Mammary epithelial cell (primary cell): ENCODE measurements at regions of chr12 and their contacts with region 1.

Region 1: GRCh38 chr12:15522565-15523187 is 200.4 kb downstream of the PTPRO start:
- DNase-seq: peak; percentile 39
- H3K4me3 ChIP-seq: no peak overlapping the region
- H3K27ac ChIP-seq: no peak overlapping the region
- H3K4me1 ChIP-seq: peaks cover 22% of the 10 kb centered on the region
- H3K27me3 ChIP-seq: no peaks in the 10 kb centered on the region
- CTCF ChIP-seq: peak; percentile 65 to 71

Region 2: DNA sequence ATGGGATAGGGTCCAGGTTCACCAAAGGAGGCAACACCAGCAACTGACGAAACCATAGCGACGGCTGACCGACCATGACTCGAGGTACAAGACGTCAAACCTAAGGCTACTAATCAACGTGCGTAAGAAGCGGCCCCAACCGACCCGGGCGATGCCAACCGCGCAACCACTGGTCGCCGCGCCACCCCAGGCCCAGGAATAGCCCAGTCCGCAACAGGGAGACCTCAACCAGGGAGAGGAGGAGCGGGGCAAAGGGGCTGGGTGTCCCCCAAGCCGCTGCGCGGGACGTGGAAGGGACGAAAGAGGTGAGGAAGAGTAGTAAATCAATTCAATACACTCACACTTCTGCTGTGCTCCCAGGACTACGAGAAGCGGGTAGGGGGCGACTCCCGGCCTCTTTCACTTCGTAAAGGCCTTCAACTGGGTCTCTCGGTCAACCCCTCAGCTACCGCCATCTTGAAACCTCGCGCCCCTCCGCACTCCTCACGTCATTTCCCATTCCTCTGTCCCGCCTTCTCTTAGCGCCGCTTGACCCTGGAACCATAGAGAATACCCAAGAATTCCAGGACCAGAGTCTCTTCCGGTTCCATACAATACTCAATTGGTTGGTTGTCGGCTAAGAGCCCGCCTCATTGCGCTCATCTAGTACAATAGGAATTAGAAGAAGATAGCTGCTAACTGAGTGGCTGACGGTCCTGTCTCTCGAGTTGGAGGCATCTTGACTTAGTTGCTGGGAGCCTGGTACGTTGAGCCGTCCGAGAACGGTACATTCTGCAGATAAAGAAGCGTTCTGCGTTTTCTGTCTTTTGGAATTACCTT is 719.5 kb before region 1 on chr12 and contains the starts of genes C12orf60 and WBP11:
- CTCF ChIA-PET with region 1: no interaction called
- dilution Hi-C with region 1: no loop called
- in situ Hi-C with region 1: no loop called
- intact Hi-C with region 1: loop called (anchors 10 kb)
- DNase-seq: peak; percentile 99
- H3K4me3 ChIP-seq: peak within 1 kb of the TSS; percentile 70 to 100 (median 99)
- H3K27ac ChIP-seq: peak within 1 kb of the TSS; percentile 99
- H3K4me1 ChIP-seq: peaks cover 14% of the 10 kb centered on the region
- H3K27me3 ChIP-seq: no peaks in the 10 kb centered on the region
- CTCF ChIP-seq: no peak
- total RNA-seq, gene C12orf60: 0.83 to 1.3 TPM
- total RNA-seq, gene WBP11: 12.0 to 61.2 TPM

Region 3: GRCh38 chr12:14995583-14996425 is 526.9 kb before region 1 on chr12:
- CTCF ChIA-PET with region 1: interaction called, 15 read pairs
- dilution Hi-C with region 1: no loop called
- in situ Hi-C with region 1: no loop called
- intact Hi-C with region 1: loop called (anchors 5 kb)
- DNase-seq: peak; percentile 29
- H3K4me3 ChIP-seq: no peak overlapping the region
- H3K27ac ChIP-seq: no peak overlapping the region
- H3K4me1 ChIP-seq: peaks cover 2% of the 10 kb centered on the region
- H3K27me3 ChIP-seq: no peaks in the 10 kb centered on the region
- CTCF ChIP-seq: peak; percentile 61 to 63

Region 4: DNA sequence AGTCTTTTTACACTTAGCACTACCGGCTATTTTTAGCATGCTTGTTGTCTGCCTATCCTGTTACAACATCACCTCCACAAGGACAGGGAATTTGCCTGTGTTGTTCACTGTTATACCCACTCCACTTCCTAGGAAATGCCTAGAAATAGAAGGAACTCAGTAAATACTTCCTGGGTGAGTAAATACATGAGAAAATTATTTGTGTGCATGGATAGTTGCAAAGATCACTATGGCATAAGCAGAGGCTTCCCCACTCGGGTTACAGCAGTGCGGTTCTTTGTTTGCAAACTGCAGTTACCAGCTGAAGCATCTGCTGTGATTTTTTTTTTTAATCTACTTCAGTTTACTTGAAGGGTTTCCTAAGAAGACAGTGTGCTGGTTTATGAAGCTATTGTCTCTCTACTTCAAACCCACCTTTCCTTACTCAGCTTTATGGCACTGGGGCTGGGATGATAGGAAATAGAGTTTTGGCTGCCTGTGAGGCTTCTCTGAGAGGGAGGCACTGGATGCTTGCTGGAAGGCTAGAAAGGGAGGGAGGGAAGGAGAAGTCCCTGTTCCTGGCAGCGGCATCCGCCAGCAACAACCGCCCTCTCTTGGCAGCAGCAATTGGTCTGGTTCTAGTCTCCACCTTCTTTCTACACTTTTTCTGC is 520.8 kb before region 1 on chr12:
- CTCF ChIA-PET with region 1: no interaction called
- dilution Hi-C with region 1: no loop called
- in situ Hi-C with region 1: no loop called
- intact Hi-C with region 1: loop called (anchors 5 kb)
- DNase-seq: no peak
- H3K4me3 ChIP-seq: no peak overlapping the region
- H3K27ac ChIP-seq: no peak overlapping the region
- H3K4me1 ChIP-seq: peaks cover 2% of the 10 kb centered on the region
- H3K27me3 ChIP-seq: no peaks in the 10 kb centered on the region
- CTCF ChIP-seq: no peak

Region 5: DNA sequence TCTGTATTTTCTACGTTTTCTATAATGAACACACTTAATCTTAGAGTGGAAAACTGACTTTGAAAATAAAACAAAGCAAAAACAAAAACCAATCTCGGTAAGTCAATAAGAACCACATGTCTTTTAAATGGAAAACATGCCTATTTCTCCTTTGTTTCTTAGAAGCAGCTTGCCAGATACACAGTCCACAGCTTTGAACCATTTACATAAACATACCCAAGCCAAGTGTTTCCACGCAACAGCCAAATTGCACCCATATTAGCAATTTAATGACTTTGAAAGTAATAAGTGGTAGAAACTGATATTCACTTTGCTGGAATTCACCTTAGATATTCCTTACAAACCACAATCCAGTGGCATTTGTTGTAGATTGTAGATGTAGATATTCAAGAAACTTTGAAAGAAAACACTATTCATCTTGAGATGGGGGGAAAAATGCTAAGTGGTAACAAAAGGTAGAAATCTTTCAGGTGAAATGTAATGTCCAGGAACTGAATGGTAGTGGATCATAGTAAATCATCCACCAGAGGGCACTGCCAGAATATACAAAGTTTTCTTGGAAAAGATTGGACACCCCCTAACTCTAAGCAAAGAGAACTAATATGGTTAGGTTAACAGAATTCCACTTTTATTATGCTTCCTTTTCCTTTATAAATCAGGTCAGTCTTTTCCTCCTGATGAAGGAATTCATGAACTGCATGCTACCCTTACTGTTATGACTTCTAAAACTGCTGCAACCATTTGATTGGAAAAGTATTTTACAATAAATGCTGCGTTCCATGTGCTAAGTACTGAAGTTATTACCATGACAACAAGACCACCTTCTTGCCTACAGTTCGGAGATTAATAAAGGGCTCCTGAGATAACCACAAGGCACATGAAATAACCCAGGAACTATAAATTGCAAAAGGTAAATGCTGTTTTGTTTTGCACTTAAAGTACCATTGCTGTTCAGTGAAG is 371.2 kb before region 1 on chr12:
- CTCF ChIA-PET with region 1: interaction called, 3 read pairs
- dilution Hi-C with region 1: no loop called
- in situ Hi-C with region 1: loop called in 1 of 2 experiments (anchors 10 kb)
- intact Hi-C with region 1: loop called (anchors 1 kb)
- DNase-seq: no peak
- H3K4me3 ChIP-seq: no peak overlapping the region
- H3K27ac ChIP-seq: no peak overlapping the region
- H3K4me1 ChIP-seq: peaks cover 10% of the 10 kb centered on the region
- H3K27me3 ChIP-seq: no peaks in the 10 kb centered on the region
- CTCF ChIP-seq: peak; percentile 28 to 61

Region 6: GRCh38 chr12:15227004-15227679 is 295.5 kb before region 1 on chr12:
- CTCF ChIA-PET with region 1: interaction called, 3 read pairs
- dilution Hi-C with region 1: no loop called
- in situ Hi-C with region 1: no loop called
- intact Hi-C with region 1: loop called (anchors 1 kb)
- DNase-seq: peak; percentile 36
- H3K4me3 ChIP-seq: no peak overlapping the region
- H3K27ac ChIP-seq: no peak overlapping the region
- H3K4me1 ChIP-seq: no peaks in the 10 kb centered on the region
- H3K27me3 ChIP-seq: no peaks in the 10 kb centered on the region
- CTCF ChIP-seq: peak; percentile 76 to 79

Region 7: DNA sequence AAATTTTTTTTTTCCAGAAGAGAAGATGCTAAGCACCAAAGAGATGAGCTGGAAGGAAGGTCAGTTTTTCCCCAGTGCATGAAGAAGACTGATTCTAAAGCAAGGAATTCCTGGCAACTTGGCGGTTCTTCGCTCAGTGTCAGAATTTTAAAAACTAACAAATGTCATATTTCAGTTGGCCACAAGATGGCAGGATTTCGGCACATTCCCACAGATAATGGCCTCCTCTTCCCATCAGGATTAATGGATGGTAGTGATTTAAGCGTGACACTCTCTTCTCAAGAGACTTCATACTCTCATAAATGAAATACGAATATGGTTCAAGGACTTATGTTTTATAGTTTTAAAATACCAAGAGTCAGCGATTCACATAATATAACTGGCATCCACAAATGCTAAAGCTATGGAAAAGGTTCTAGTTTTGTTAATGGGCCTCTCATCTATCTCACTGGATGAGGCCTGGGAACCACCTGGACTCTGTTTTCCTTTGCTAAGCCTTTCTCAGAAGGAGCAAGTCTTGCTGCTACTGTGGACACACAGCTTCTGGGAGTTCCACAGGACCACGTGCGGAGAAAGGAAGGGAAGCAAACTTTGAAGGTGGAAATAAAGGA is 246.5 kb before region 1 on chr12:
- CTCF ChIA-PET with region 1: interaction called, 5 read pairs
- dilution Hi-C with region 1: no loop called
- in situ Hi-C with region 1: loop called (anchors 5 kb)
- intact Hi-C with region 1: loop called (anchors 1 kb)
- DNase-seq: peak; percentile 48
- H3K4me3 ChIP-seq: no peak overlapping the region
- H3K27ac ChIP-seq: peak overlapping the region; percentile 88
- H3K4me1 ChIP-seq: peaks cover 54% of the 10 kb centered on the region
- H3K27me3 ChIP-seq: no peaks in the 10 kb centered on the region
- CTCF ChIP-seq: peak; percentile 55 to 58